HepG2 (cell line): ENCODE measurements at regions of chr15 and their contacts with region 1.

Region 1: DNA sequence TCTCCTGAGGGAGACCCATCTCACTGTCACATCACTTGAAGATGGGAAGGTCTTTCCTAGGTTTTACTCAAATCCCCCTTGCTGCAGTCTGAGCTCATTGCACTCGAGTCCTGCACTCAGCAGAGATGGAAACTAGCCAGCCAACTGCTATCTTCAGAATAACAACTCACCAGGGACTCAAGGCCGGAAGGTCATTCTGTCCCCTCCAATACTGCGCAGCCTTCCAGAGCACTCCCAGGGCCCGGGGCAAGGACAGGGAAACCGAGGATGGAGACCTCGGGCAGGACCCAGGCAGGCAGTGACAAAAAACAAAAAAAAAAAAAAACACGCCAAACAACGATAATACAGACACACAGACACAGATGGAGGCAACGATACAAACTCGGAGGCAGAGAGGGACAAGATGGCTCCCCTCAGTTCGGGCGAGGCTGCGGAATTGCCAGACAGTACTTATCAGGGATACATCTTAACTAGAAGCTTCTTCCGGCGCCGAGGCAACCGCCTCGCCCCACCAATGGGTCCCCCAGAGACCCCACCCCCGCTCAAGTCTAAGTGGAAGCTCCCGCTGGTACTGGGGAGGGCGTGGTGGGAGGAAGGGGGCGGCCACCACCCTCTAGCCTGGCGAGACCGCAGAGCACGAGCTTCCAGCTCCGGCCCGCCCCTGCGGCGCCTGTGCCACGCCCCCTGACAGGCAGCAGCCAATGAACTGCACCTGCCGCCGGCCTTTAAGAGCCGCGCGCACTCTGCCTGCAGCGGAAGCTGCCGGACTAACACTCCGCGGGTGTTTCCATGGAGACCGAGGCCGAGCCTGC is 7.0 kb upstream of the MAP1A start:
- DNase-seq: peak; percentile 97
- ATAC-seq: peak; percentile 96
- H3K4me3 ChIP-seq: peak overlapping the region; percentile 67 to 78 (median 73)
- H3K27ac ChIP-seq: peak overlapping the region; percentile 80
- H3K4me1 ChIP-seq: peaks cover 32% of the 10 kb centered on the region
- H3K27me3 ChIP-seq: peaks cover 2 to 7% of the 10 kb centered on the region in 2 experiments; a peak in 3 of 5 replicates
- CTCF ChIP-seq: 0 out of 2 replicates have a peak, but pooled peaks have one; percentile 20
- EP300 ChIP-seq: no peak
- POLR2A ChIP-seq: peak; percentile 38 to 54; a peak in 3 of 4 replicates
- RAD21 ChIP-seq: no peak

Region 2: DNA sequence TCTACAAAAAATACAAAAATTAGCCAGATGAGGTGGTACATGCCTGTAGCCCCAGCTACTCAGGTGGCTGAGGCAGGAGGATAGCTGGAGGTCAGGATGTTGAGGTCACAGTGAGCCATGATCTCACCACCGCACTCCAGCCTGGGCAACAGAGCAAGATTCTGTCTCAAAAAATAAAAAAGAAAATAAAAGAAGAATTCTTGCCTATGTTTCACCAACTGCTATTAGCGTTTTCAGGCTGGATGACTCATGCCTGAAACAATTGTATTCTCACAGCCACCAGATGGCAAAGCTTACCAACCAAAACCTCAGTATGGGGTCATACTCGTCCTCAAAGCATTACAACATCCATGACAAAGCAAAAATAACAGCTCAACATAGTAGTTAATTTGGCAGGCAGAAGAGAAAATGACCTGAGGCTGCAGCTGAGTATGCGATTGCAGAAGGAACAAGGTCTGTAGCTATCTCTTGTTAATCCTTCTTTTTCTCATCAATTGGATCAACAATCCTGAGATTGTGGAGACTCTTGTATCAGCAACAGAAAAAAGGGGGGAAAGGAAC is 69.6 kb before region 1 on chr15:
- CTCF ChIA-PET with region 1: interaction called, 3 read pairs
- POLR2A ChIA-PET with region 1: interaction called, 6 read pairs
- in situ Hi-C with region 1: no loop called
- intact Hi-C with region 1: loop called (anchors 2 kb)
- DNase-seq: peak; percentile 84
- ATAC-seq: peak; percentile 92
- H3K4me3 ChIP-seq: no peak overlapping the region
- H3K27ac ChIP-seq: peak overlapping the region; percentile 51
- H3K4me1 ChIP-seq: peaks cover 16% of the 10 kb centered on the region
- H3K27me3 ChIP-seq: no peaks in the 10 kb centered on the region
- CTCF ChIP-seq: peak; percentile 67
- EP300 ChIP-seq: 0 out of 4 replicates have a peak, but pooled peaks of 1 of the 2 experiments have one; percentile 39
- POLR2A ChIP-seq: no peak
- RAD21 ChIP-seq: peak; percentile 46; the same call in 1 of the 2 replicates

Region 3: DNA sequence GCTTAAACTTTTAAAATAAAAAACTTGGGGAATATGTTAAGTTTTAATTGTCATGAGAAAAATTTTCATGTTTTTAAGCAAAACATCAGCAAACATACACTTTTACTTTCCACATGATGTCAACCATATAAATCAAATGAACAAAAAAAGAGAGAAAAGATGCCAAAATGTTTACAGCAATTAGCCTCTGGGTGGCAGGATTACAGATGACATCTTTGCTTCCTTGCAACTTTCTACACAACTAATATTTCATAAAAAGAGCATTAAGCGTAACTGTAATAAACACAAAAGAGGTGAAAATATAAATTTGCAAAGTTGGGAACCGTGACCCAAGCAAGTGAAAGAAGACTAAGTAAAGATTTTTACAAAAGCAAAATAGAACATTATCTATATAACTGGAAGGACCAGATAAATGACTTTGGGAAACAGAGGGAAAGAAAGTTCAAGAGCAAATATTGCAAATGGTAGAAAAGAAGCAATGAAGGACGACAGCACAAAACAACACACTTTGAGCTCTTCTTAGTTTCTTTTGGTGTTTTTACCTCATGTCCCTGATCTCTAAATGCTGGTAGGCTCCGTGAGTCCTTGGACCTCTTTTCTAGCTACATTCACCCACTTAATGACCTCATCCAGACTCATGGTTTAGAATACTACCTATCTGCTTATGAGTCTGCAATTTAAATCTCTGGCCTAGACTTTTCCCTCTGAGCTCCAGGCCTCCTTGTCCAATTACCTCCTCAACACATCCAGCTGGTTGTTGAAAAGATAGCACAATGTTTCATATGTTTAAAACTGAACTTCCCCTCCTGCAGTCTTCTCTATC is 26.9 kb before region 1 on chr15:
- CTCF ChIA-PET with region 1: interaction called, 6 read pairs
- POLR2A ChIA-PET with region 1: no interaction called
- in situ Hi-C with region 1: no loop called
- intact Hi-C with region 1: loop called (anchors 1 kb)
- DNase-seq: no peak
- ATAC-seq: no peak
- H3K4me3 ChIP-seq: no peak overlapping the region
- H3K27ac ChIP-seq: no peak overlapping the region
- H3K4me1 ChIP-seq: no peaks in the 10 kb centered on the region
- H3K27me3 ChIP-seq: no peaks in the 10 kb centered on the region
- CTCF ChIP-seq: no peak
- EP300 ChIP-seq: no peak
- POLR2A ChIP-seq: no peak
- RAD21 ChIP-seq: no peak

Region 4: DNA sequence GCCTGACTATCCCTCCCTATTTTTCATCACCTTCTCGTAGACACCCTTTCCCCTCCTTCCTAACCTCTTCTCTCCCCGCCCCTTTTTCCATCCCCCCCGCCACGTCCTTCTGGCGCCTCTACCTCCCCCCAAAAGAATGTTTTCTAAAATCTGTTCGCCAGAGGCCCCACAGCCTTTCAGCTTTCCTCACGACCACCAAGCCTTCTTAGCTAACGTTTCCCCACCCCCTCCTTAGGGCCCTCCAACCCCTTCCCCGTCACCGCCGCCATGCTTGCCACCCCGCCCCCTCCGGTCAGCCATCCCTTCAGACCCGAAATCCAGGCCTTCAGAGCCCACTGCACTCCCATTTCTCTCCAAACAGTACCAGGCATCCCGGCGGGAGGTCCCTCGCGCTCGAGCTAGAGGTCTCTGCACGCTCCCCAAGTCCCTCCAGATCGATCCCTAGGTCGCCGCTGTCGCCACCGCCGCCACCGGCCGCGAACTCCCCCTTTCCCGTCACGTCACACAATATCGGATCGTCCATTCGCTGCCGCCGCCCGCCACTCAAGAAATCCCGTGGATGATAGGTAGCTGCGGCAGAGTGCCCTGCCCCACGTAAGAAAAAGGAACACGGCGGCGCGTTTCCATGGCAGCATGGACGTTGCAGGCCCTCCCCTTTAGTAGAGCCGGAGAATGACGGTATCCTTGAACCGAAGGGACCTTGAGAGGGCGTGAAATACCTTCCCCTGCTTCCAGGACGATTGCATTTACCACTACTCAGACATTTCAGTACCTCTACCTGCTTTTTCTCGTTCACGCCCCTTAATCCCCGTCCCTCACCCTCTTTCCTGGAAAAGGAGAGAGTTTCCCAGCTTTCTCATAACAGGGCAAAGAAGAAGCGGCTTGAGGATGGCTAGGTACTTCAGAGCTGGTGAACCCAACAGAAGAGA is 17.5 kb before region 1 on chr15 and contains the start of gene TP53BP1:
- CTCF ChIA-PET with region 1: no interaction called
- POLR2A ChIA-PET with region 1: interaction called, 24 read pairs
- in situ Hi-C with region 1: no loop called
- intact Hi-C with region 1: loop called (anchors 2 kb)
- DNase-seq: peak; percentile 89
- ATAC-seq: peak; percentile 99
- H3K4me3 ChIP-seq: peak within 1 kb of the TSS; percentile 82 to 98 (median 86)
- H3K27ac ChIP-seq: peak within 1 kb of the TSS; percentile 41
- H3K4me1 ChIP-seq: peaks cover 23% of the 10 kb centered on the region
- H3K27me3 ChIP-seq: no peaks in the 10 kb centered on the region; a peak in 1 of 5 replicates
- CTCF ChIP-seq: no peak
- EP300 ChIP-seq: no peak
- POLR2A ChIP-seq: no peak; a peak in 1 of 4 replicates
- RAD21 ChIP-seq: no peak
- total RNA-seq, gene TP53BP1: 17.4 and 26.3 TPM in 2 replicates

Region 5: DNA sequence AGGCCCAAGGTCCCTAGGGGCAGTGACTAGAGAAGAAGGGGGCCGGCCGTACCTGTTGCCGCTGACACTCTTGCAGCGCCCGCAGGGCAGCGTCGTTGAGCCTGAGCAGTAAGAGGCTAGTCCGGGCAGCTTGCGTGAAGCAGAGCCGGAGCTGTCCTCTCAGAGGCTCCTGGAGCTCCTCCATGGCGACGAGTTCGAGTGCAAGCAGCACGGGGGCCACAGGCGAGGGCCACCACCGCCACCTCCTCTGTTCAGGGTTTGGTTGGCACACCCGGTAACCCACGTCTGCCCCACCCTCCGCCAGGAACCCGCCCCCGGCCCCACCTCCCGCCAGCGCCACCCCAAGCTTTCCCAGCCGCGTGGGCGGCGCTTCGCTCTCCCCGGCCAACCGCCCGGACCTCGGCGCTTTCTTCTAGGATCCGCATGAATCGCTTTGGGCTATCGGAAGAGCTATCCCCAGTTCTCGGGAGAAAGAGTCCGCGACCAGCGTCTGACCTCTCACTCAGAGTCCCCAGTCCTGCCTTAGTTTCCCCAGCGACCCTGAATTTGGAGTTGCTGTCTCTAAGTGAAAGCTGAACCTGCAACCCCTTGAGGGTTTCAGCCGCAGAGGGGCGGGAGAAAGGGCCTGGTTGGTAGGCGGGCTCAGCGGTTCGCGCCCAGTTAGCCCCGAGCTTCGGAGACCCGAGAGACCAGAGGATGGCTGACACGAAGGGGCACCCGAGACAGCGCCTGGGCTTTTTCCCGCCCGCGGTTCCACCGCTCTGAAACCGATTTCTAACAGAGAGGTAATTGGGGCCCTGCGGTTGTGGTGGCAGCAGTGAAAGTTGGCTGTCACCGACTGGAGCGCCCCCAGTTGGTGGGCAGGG is 266.5 kb after region 1 on chr15 and contains the start of gene ELL3:
- CTCF ChIA-PET with region 1: no interaction called
- POLR2A ChIA-PET with region 1: no interaction called
- in situ Hi-C with region 1: loop called (anchors 10 kb)
- intact Hi-C with region 1: no loop called
- DNase-seq: peak; percentile 58
- ATAC-seq: peak; percentile 72
- H3K4me3 ChIP-seq: peak within 1 kb of the TSS; percentile 65 to 97 (median 78)
- H3K27ac ChIP-seq: peak within 1 kb of the TSS; percentile 86
- H3K4me1 ChIP-seq: peaks cover 15% of the 10 kb centered on the region
- H3K27me3 ChIP-seq: no peaks in the 10 kb centered on the region
- CTCF ChIP-seq: peak; percentile 94
- EP300 ChIP-seq: no peak
- POLR2A ChIP-seq: peak in 1 of 2 experiments; percentile 83; a peak in 3 of 4 replicates
- RAD21 ChIP-seq: peak; percentile 33; the same call in 1 of the 2 replicates
- total RNA-seq, gene ELL3: 5.8 and 6.1 TPM in 2 replicates